ENCODE measurements at regions of chr4 and their contacts with region 1.

Region 1: GRCh38 chr4:40309250-40309774 is 25.8 kb upstream of the CHRNA9 start:
- DNase-seq: peak; percentile 61
- ATAC-seq: peak; percentile 97
- H3K4me3 ChIP-seq: peak overlapping the region in 1 of 2 experiments; percentile 37; a peak in 2 of 4 replicates
- H3K27ac ChIP-seq: peak overlapping the region; percentile 65
- H3K4me1 ChIP-seq: peaks cover 5% of the 10 kb centered on the region; the same call in 1 of the 2 replicates
- H3K27me3 ChIP-seq: no peaks in the 10 kb centered on the region
- CTCF ChIP-seq: peak; percentile 83

Region 2: DNA sequence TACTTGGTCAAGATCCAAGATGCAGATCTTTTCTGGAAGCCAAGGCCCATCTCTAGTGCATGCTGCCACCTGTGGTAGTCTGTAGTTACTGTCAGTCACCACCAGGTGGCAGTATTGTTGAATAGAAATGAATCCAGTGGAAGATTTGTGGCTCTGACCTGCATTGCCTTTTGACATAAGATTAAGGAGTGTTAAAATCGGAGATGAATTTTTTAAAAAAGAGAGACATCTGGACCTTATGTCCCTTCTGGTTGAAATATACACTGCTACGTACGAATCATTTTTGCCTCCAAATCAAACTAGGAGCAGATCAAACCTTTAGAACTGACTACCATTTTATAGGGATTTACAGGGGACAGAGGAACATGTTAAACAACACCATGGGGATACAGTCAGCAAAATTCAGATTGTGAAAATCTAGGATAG is 159.3 kb before region 1 on chr4:
- CTCF ChIA-PET with region 1: no interaction called
- POLR2A ChIA-PET with region 1: no interaction called
- in situ Hi-C with region 1: no loop called
- intact Hi-C with region 1: loop called (anchors 1 kb)
- DNase-seq: peak; percentile 41
- ATAC-seq: peak; percentile 86
- H3K4me3 ChIP-seq: no peak overlapping the region
- H3K27ac ChIP-seq: peak overlapping the region; percentile 73; the same call in 1 of the 2 replicates
- H3K4me1 ChIP-seq: no peaks in the 10 kb centered on the region
- H3K27me3 ChIP-seq: no peaks in the 10 kb centered on the region
- CTCF ChIP-seq: peak; percentile 74

Region 3: GRCh38 chr4:40446839-40447238 is 137.5 kb after region 1 on chr4:
- CTCF ChIA-PET with region 1: no interaction called
- POLR2A ChIA-PET with region 1: no interaction called
- in situ Hi-C with region 1: no loop called
- intact Hi-C with region 1: no loop called
- DNase-seq: no peak
- ATAC-seq: no peak
- H3K4me3 ChIP-seq: no peak overlapping the region
- H3K27ac ChIP-seq: no peak overlapping the region
- H3K4me1 ChIP-seq: peaks cover 2% of the 10 kb centered on the region; the same call in 1 of the 2 replicates
- H3K27me3 ChIP-seq: no peaks in the 10 kb centered on the region
- CTCF ChIP-seq: no peak